PC-3 (cell line): ENCODE measurements at regions of chr9 and their contacts with region 1.

Region 1: GRCh38 chr9:102609461-102609860 is 385.7 kb upstream of the CYLC2 start:
- DNase-seq: no peak
- ATAC-seq: no peak
- H3K4me3 ChIP-seq: no peak overlapping the region
- H3K27ac ChIP-seq: no peak overlapping the region
- H3K4me1 ChIP-seq: no peaks in the 10 kb centered on the region
- H3K27me3 ChIP-seq: no peaks in the 10 kb centered on the region
- CTCF ChIP-seq: no peak

Region 2: DNA sequence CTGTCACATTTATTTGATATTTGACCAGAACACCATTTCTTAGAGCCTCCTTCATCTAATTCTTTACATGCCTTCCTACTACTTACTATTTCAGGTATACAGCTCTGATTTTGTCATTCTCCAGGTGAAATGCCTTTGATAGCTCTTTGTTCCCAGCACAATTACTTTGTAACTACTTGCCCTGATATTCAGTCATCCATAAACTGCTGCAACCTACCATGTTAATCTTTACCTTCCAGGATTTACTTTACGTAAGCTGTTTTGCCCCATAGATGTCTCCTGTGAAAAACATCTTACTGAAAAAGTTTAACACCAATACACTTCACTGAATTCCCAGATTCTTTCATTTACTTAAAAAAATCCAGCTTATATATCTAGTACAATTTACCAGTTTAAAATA is 58.1 kb before region 1 on chr9:
- CTCF ChIA-PET with region 1: no interaction called
- POLR2A ChIA-PET with region 1: no interaction called
- intact Hi-C with region 1: loop called (anchors 10 kb)
- DNase-seq: no peak
- ATAC-seq: no peak
- H3K4me3 ChIP-seq: no peak overlapping the region
- H3K27ac ChIP-seq: no peak overlapping the region
- H3K4me1 ChIP-seq: no peaks in the 10 kb centered on the region
- H3K27me3 ChIP-seq: no peaks in the 10 kb centered on the region
- CTCF ChIP-seq: no peak